ENCODE measurements at regions of chrX and their contacts with region 1.

Region 1: GRCh38 chrX:18390941-18391538 is 34.4 kb upstream of the CDKL5 start:
- DNase-seq: peak; percentile 63
- ATAC-seq: peak; percentile 71
- H3K4me3 ChIP-seq: no peak overlapping the region
- H3K27ac ChIP-seq: no peak overlapping the region
- H3K4me1 ChIP-seq: no peaks in the 10 kb centered on the region
- H3K27me3 ChIP-seq: no peaks in the 10 kb centered on the region
- CTCF ChIP-seq: peak; percentile 73
- POLR2A ChIP-seq: no peak
- RAD21 ChIP-seq: peak; percentile 72

Region 2: GRCh38 chrX:18102006-18102405 is 289.0 kb before region 1 on chrX:
- CTCF ChIA-PET with region 1: no interaction called
- POLR2A ChIA-PET with region 1: no interaction called
- dilution Hi-C with region 1: no loop called
- in situ Hi-C with region 1: no loop called
- intact Hi-C with region 1: no loop called
- DNase-seq: no peak
- ATAC-seq: no peak
- H3K4me3 ChIP-seq: no peak overlapping the region
- H3K27ac ChIP-seq: no peak overlapping the region
- H3K4me1 ChIP-seq: no peaks in the 10 kb centered on the region
- H3K27me3 ChIP-seq: no peaks in the 10 kb centered on the region
- CTCF ChIP-seq: no peak
- POLR2A ChIP-seq: no peak
- RAD21 ChIP-seq: no peak

Region 3: GRCh38 chrX:18886344-18887161 is 495.5 kb after region 1 on chrX:
- CTCF ChIA-PET with region 1: no interaction called
- POLR2A ChIA-PET with region 1: no interaction called
- dilution Hi-C with region 1: no loop called
- in situ Hi-C with region 1: loop called (anchors 10 kb)
- intact Hi-C with region 1: loop called (anchors 5 kb)
- DNase-seq: peak; percentile 23
- ATAC-seq: peak; percentile 72
- H3K4me3 ChIP-seq: peak overlapping the region; percentile 39
- H3K27ac ChIP-seq: peak overlapping the region; percentile 67; the same call in 1 of the 2 replicates
- H3K4me1 ChIP-seq: peaks cover 11% of the 10 kb centered on the region; the same call in 1 of the 2 replicates
- H3K27me3 ChIP-seq: no peaks in the 10 kb centered on the region; the same call in 1 of the 2 replicates
- CTCF ChIP-seq: peak; percentile 37
- POLR2A ChIP-seq: no peak
- RAD21 ChIP-seq: peak; percentile 32

Region 4: GRCh38 chrX:18931972-18932371 is 540.9 kb after region 1 on chrX:
- CTCF ChIA-PET with region 1: no interaction called
- POLR2A ChIA-PET with region 1: no interaction called
- dilution Hi-C with region 1: no loop called
- in situ Hi-C with region 1: loop called (anchors 10 kb)
- intact Hi-C with region 1: no loop called
- DNase-seq: peak; percentile 30
- ATAC-seq: peak; percentile 71
- H3K4me3 ChIP-seq: no peak overlapping the region
- H3K27ac ChIP-seq: no peak overlapping the region
- H3K4me1 ChIP-seq: no peaks in the 10 kb centered on the region
- H3K27me3 ChIP-seq: no peaks in the 10 kb centered on the region
- CTCF ChIP-seq: peak; percentile 60
- POLR2A ChIP-seq: no peak
- RAD21 ChIP-seq: peak; percentile 73

Region 5: DNA sequence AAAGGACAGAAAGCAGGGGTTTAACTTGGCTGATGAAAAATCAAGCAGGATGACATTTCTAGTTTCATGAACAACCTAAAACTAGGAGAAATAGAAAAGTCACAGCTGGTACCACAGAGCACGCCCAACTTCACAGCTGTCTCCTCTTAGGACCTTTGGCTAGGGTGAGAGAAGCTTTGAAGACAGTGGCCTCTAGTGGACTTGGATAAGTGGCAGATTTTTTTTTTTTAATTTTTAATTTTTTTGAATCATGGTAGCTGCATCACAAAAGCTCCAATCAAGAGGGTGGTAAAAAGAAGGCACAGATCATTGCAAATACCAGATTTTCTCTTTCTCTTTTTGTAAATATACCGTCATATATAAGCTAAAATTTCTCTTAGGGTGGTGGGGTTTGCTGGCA is 1144.4 kb after region 1 on chrX:
- CTCF ChIA-PET with region 1: no interaction called
- POLR2A ChIA-PET with region 1: no interaction called
- dilution Hi-C with region 1: no loop called
- in situ Hi-C with region 1: loop called (anchors 25 kb)
- intact Hi-C with region 1: loop called (anchors 5 kb)
- DNase-seq: peak; percentile 24
- ATAC-seq: peak; percentile 68
- H3K4me3 ChIP-seq: no peak overlapping the region
- H3K27ac ChIP-seq: no peak overlapping the region
- H3K4me1 ChIP-seq: no peaks in the 10 kb centered on the region
- H3K27me3 ChIP-seq: no peaks in the 10 kb centered on the region
- CTCF ChIP-seq: peak; percentile 45
- POLR2A ChIP-seq: no peak
- RAD21 ChIP-seq: peak; percentile 47; the same call in 1 of the 2 replicates

Region 6: GRCh38 chrX:20116579-20117240 is 1725.7 kb after region 1 on chrX and contains the start of gene MAP7D2:
- CTCF ChIA-PET with region 1: no interaction called
- POLR2A ChIA-PET with region 1: no interaction called
- dilution Hi-C with region 1: no loop called
- in situ Hi-C with region 1: loop called (anchors 25 kb)
- intact Hi-C with region 1: no loop called
- DNase-seq: no peak
- ATAC-seq: peak; percentile 42
- H3K4me3 ChIP-seq: no peak within 1 kb of the TSS; the same call in 1 of the 2 replicates
- H3K27ac ChIP-seq: no peak within 1 kb of the TSS
- H3K4me1 ChIP-seq: no peaks in the 10 kb centered on the region
- H3K27me3 ChIP-seq: peaks cover 32% of the 10 kb centered on the region
- CTCF ChIP-seq: no peak
- POLR2A ChIP-seq: no peak
- RAD21 ChIP-seq: no peak
- total RNA-seq, gene MAP7D2: under 0.01 and 0.18 TPM in 2 replicates

Measured in IMR-90 (cell line).